ENCODE measurements at regions of chr20 and their contacts with region 1.

Region 1: DNA sequence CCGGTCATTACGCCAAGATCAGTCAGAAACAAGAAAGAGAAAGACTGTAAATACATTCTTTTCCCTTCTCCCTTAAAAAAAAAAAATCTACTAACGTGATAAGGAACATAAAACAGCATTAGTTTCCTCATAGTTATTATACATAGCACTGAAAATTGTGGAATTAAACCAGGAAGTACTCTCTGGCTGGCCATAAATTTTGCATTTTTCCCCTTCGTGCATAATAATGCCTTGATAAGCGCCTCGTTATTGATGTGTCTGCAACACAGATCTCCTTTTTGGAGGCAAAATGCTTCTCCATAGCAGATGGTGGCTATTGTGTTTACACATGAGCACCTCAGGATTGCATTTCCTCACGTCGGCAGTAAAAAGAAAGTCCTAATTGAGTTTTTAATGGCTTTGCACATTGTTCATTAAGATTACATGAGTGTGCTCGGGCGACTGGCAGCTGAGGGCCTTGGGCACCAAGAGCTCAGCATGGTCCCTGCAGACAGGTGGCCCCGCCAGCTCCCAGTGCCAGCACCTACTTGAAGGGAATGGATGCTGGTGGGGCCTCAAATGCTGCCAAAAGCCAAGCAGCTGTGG is 394.5 kb downstream of the PTPRT start:
- DNase-seq: no peak
- ATAC-seq: no peak
- H3K4me3 ChIP-seq: no peak overlapping the region
- H3K27ac ChIP-seq: no peak overlapping the region
- H3K4me1 ChIP-seq: no peaks in the 10 kb centered on the region
- H3K27me3 ChIP-seq: peaks cover 0 to 8% (median 4%) of the 10 kb centered on the region in 7 donors
- CTCF ChIP-seq: no peak

Region 2: DNA sequence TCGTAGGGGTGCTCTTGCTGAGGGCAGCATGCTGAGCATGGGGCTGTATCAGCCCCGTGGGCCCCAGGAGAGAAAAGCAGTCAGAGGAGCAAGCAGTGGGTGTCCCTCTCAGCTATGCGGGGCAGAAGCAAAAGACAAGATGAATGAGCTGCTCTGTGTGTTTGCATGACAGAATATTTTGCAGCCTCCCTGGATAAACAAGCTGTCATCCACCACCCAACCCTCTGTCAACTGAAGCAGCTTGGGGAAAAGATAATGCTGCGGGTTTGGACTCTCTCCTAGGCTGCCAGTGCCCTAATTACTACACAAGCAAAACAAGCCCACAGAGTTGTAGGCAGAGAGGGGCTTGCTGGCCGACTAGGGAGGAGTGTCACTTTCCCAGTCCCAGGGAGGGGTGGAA is 476.8 kb after region 1 on chr20:
- intact Hi-C with region 1: loop called in 1 of 10 experiments (anchors 2 kb)
- DNase-seq: no peak
- ATAC-seq: no peak
- H3K4me3 ChIP-seq: no peak overlapping the region
- H3K27ac ChIP-seq: no peak overlapping the region
- H3K4me1 ChIP-seq: no peaks in the 10 kb centered on the region
- H3K27me3 ChIP-seq: peaks cover 0 to 19% (median 0%) of the 10 kb centered on the region in 7 donors
- CTCF ChIP-seq: no peak